Calu3 (cell line): ENCODE measurements at regions of chr19 and their contacts with region 1.

Region 1: DNA sequence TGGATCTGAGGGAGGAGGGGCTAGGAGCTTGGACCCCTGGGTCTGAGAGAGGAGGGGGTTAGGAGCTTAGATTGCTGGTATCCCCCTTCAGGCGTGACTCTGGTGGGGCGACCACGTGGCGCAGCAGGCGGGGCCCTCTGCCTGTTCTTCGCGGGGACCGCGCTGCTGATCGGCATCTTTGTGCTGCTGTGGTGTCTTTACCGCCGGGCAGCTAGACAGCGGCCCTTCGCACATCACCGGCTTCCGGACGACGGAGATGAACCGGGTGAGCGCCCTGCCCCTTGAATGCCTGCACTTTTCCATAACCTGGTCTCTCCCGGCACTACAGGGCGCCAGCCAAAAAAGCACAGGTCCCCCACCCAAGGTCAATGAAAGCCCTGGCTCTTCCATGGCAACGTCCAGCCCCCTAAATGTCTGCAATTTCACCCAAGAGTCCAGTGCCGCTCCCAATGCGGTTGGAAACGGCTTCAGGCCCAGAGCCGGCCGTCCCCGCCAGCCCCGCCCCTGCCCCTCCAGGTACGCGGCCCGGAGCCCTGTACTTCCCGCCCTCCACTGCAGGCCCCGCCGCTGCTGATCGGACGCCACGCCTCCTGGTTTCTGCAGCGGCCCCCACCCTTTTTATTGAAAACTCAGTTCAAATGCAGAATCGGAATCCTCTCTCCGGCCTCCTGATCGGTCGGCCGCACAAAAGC is 2.8 kb downstream of the GFY start:
- DNase-seq: peak; percentile 42
- H3K4me3 Mint-ChIP-seq: peak overlapping the region; percentile 37
- H3K27ac Mint-ChIP-seq: no peak overlapping the region
- H3K4me1 Mint-ChIP-seq: peaks cover 29% of the 10 kb centered on the region
- H3K27me3 Mint-ChIP-seq: peaks cover 99% of the 10 kb centered on the region
- CTCF ChIP-seq: no peak

Region 2: GRCh38 chr19:49391581-49392399 is 36.2 kb before region 1 on chr19:
- CTCF ChIA-PET with region 1: no interaction called
- intact Hi-C with region 1: loop called (anchors 5 kb)
- DNase-seq: peak; percentile 87
- H3K4me3 Mint-ChIP-seq: no peak overlapping the region
- H3K27ac Mint-ChIP-seq: no peak overlapping the region
- H3K4me1 Mint-ChIP-seq: peaks cover 9% of the 10 kb centered on the region
- H3K27me3 Mint-ChIP-seq: peaks cover 83% of the 10 kb centered on the region
- CTCF ChIP-seq: peak; percentile 85